Activated naive CD4-positive, alpha-beta T cell treated with anti-CD3 and anti-CD28 coated beads for 36 hours (primary cell): ENCODE measurements at regions of chr7 and their contacts with region 1.

Region 1: DNA sequence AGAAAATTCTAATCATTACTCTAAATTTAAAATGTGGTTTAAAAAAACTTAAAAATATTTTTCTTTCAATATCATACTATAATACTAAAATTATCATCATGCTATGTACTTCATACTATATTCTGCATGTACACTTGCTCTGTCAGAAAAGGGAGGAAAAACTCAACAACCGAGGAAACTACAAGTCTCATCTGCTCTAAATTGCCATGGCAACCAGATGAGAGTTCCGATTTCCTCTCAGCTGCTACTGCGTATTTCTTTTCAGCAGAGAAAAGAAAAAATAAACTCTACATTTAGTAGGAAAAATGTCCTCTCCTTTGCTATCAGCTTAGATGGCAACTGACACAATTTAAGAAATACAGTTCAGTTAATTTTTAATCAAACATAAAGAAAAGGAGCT is 178.9 kb downstream of the SRPK2 start:
- DNase-seq: peak; percentile 28
- H3K4me3 Mint-ChIP-seq: no peak overlapping the region
- H3K27ac Mint-ChIP-seq: no peak overlapping the region
- H3K4me1 Mint-ChIP-seq: peaks cover 65% of the 10 kb centered on the region
- H3K27me3 Mint-ChIP-seq: no peaks in the 10 kb centered on the region

Region 2: GRCh38 chr7:105118612-105119600 is 91.0 kb before region 1 on chr7:
- CTCF ChIA-PET with region 1: no interaction called
- intact Hi-C with region 1: no loop called
- DNase-seq: no peak
- H3K4me3 Mint-ChIP-seq: no peak overlapping the region
- H3K27ac Mint-ChIP-seq: no peak overlapping the region
- H3K4me1 Mint-ChIP-seq: peaks cover 26% of the 10 kb centered on the region
- H3K27me3 Mint-ChIP-seq: no peaks in the 10 kb centered on the region

Region 3: DNA sequence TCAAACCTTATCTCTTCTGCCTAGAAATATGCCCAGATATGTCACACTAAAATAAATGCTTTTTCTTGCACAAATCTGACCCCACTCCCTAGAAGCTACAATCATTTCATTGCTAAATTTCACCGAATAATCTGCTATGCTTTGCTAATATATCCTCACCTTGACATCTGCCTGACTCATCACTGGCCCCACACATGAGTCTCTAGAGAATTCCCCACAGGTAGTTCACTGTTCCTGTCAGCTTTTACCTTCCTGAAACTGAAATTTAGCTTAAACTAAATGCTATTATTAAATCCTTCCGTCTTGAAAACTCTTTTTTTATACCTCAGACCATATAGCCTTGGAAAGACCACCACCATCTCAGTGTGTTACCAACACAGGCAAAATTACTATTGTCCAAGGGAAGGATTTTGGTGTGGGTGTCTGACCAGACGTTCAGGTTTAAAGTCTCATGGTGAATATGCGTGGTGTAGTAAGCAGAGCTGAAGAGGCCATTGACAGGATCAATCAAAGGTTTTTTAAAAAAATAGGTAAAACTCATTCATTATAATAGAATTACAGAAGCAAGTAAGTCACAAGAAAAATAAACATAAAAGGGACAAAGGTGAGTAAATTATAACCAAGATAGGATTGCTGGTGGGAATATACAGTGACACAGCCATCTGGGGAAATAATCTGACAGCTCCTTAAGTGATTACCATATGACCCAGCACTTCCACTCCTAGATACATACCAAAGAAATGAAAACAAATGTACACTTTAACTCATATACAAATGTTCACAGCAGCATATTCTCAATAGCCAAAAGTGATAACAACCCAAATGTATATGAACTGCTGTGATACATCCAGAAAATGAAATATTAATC is 22.3 kb before region 1 on chr7:
- CTCF ChIA-PET with region 1: interaction called, 4 read pairs
- intact Hi-C with region 1: loop called (anchors 1 kb)
- DNase-seq: peak; percentile 34
- H3K4me3 Mint-ChIP-seq: no peak overlapping the region
- H3K27ac Mint-ChIP-seq: no peak overlapping the region
- H3K4me1 Mint-ChIP-seq: peaks cover 21% of the 10 kb centered on the region
- H3K27me3 Mint-ChIP-seq: no peaks in the 10 kb centered on the region

Region 4: DNA sequence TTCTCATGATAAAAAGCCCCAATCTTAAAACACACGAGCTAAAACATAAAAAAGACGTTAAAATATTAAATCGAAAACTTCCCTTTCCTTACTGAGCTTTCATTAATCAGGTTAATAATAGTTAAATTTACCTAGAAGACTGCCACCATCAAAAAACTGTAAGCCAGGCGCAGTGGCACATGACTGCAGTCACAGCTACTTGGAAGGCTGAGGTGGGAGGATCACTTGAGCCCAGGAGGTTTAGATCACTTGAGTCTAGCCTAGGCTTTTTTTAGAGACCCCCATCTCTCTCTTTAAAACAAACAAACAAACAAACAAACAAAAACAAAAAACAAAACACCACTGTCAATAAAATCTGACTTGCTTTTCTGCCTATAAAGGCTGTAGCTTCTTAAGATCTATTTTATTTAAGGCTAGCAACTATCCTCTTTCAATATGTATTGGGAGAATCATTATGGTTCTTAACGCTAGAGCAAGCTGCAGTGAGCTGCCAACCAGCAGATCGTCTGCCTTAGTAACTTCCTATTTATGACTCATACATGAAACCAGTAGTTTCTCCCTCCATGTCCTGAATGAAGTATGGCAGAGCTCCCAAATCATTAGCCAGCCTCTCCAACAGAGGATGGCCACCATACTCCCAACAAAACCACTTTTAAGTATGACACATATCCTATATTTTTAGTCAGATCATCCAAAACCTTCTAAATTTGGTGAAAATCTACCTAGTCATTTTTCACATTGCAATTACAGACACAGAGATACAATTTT is 15.2 kb after region 1 on chr7:
- CTCF ChIA-PET with region 1: interaction called, 3 read pairs
- intact Hi-C with region 1: loop called (anchors 1 kb)
- DNase-seq: peak; percentile 22
- H3K4me3 Mint-ChIP-seq: no peak overlapping the region
- H3K27ac Mint-ChIP-seq: no peak overlapping the region
- H3K4me1 Mint-ChIP-seq: peaks cover 23% of the 10 kb centered on the region
- H3K27me3 Mint-ChIP-seq: no peaks in the 10 kb centered on the region

Region 5: GRCh38 chr7:105277341-105277740 is 67.5 kb after region 1 on chr7:
- CTCF ChIA-PET with region 1: no interaction called
- intact Hi-C with region 1: no loop called
- DNase-seq: no peak
- H3K4me3 Mint-ChIP-seq: no peak overlapping the region
- H3K27ac Mint-ChIP-seq: no peak overlapping the region
- H3K4me1 Mint-ChIP-seq: peaks cover 32% of the 10 kb centered on the region
- H3K27me3 Mint-ChIP-seq: no peaks in the 10 kb centered on the region

Region 6: DNA sequence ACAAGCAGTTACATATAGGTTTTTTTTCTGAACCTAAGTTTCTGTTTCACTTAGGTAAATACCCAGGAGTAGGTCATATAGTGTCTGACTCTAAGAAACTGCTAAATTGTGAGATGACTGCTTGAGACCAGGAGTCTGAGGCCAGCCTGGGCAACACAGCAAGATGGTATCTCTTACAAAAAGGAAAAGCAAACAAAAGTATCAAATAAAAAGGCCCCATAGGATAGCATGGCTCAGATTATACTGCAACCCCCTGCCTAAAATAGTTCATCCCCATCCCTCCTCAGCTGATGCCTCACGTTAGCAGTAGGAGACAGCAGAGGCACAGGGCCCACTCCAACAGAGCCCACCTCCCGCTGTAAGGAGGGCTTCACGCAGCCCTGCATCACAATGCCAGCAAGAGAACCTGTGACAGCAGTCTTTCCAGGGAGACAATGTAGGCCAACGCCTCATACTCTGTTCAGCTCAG is 88.6 kb after region 1 on chr7:
- CTCF ChIA-PET with region 1: no interaction called
- intact Hi-C with region 1: loop called (anchors 2 kb)
- DNase-seq: peak; percentile 55
- H3K4me3 Mint-ChIP-seq: peak overlapping the region; percentile 33
- H3K27ac Mint-ChIP-seq: peak overlapping the region; percentile 44
- H3K4me1 Mint-ChIP-seq: peaks cover 51% of the 10 kb centered on the region
- H3K27me3 Mint-ChIP-seq: no peaks in the 10 kb centered on the region

Region 7: DNA sequence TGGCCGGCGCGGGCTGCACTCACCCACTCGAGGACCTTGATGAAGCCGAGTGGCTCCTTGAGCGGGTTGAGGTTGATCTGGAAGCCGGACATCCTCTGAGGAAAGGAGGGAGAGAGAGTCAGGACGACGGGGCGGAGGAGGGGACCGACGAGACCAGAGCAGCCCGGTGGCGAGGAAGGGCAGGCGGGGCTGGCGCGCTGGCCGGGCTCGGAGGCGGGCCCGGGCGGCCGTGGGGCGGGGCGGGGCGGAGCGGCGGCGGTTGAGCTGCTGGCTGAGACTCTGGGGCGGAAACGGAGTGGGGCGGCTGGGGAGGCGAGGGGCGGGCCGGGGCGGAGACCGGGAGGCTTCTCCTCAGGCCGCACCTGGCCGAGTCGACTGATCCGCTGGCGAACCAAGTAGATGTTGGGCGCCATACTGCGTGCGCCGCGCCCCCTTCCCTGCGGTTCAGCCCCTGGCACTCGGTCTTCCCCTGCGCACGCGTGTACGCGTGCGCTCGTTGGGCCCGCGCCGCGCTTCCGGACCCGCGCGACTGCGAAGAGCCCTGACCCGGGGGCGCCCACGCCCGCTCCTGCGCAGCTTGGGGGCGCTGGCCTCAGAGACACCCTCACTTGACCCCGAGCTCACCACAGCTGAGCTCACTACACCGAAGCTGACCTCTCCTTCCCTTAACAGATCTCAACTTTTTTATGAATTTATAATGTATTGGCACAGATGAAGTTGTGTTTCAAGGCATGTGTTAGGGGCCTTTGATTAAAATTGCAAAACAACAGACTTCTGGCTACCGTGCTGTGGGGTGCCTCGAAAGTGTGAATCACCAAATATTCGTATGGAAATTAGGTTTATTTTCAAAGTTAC is 902.5 kb after region 1 on chr7 and contains the start of gene SYPL1:
- CTCF ChIA-PET with region 1: no interaction called
- intact Hi-C with region 1: loop called (anchors 5 kb)
- DNase-seq: peak; percentile 94
- H3K4me3 Mint-ChIP-seq: peak within 1 kb of the TSS; percentile 85
- H3K27ac Mint-ChIP-seq: peak within 1 kb of the TSS; percentile 92
- H3K4me1 Mint-ChIP-seq: peaks cover 71% of the 10 kb centered on the region
- H3K27me3 Mint-ChIP-seq: no peaks in the 10 kb centered on the region
- total RNA-seq, gene SYPL1: 24.7 to 26.6 TPM